Heart right ventricle (tissue), 16 donors: ENCODE measurements at regions of chr2 and their contacts with region 1.

Region 1: GRCh38 chr2:54806975-54807374 is 83.5 kb downstream of the EML6 start:
- DNase-seq: no peak
- ATAC-seq: no peak
- H3K4me3 ChIP-seq: no peak overlapping the region
- H3K27ac ChIP-seq: no peak overlapping the region
- H3K4me1 ChIP-seq: no peaks in the 10 kb centered on the region
- H3K27me3 ChIP-seq: no peaks in the 10 kb centered on the region
- CTCF ChIP-seq: no peak

Region 2: GRCh38 chr2:54767921-54768320 is 39.1 kb before region 1 on chr2:
- intact Hi-C with region 1: loop called in 1 of 10 experiments (anchors 2 kb)
- DNase-seq: no peak
- ATAC-seq: no peak
- H3K4me3 ChIP-seq: no peak overlapping the region
- H3K27ac ChIP-seq: no peak overlapping the region
- H3K4me1 ChIP-seq: no peaks in the 10 kb centered on the region
- H3K27me3 ChIP-seq: no peaks in the 10 kb centered on the region
- CTCF ChIP-seq: no peak